Aorta (tissue), 5 donors: ENCODE measurements at regions of chr20 and their contacts with region 1.

Region 1: GRCh38 chr20:41693136-41693979 is 75.2 kb upstream of the CHD6 start:
- DNase-seq: peak; percentile 86 to 90
- ATAC-seq: peak; percentile 95
- H3K4me3 ChIP-seq: peak overlapping the region; percentile 79 to 89
- H3K27ac ChIP-seq: peak overlapping the region; percentile 71 to 83
- H3K4me1 ChIP-seq: no peaks in the 10 kb centered on the region
- H3K27me3 ChIP-seq: no peaks in the 10 kb centered on the region

Region 2: GRCh38 chr20:41476013-41476752 is 217.2 kb before region 1 on chr20:
- intact Hi-C with region 1: loop called (anchors 10 kb)
- DNase-seq: no peak
- ATAC-seq: no peak
- H3K4me3 ChIP-seq: no peak overlapping the region
- H3K27ac ChIP-seq: no peak overlapping the region
- H3K4me1 ChIP-seq: no peaks in the 10 kb centered on the region
- H3K27me3 ChIP-seq: no peaks in the 10 kb centered on the region

Region 3: GRCh38 chr20:41482647-41483552 is 210.5 kb before region 1 on chr20:
- intact Hi-C with region 1: loop called (anchors 10 kb)
- DNase-seq: no peak
- ATAC-seq: no peak
- H3K4me3 ChIP-seq: no peak overlapping the region
- H3K27ac ChIP-seq: peak overlapping the region in 1 of 2 donors; percentile 74
- H3K4me1 ChIP-seq: no peaks in the 10 kb centered on the region
- H3K27me3 ChIP-seq: no peaks in the 10 kb centered on the region

Region 4: GRCh38 chr20:41639630-41640029 is 53.7 kb before region 1 on chr20:
- intact Hi-C with region 1: loop called in 1 of 2 experiments (anchors 5 kb)
- DNase-seq: no peak
- ATAC-seq: no peak
- H3K4me3 ChIP-seq: no peak overlapping the region
- H3K27ac ChIP-seq: no peak overlapping the region
- H3K4me1 ChIP-seq: no peaks in the 10 kb centered on the region
- H3K27me3 ChIP-seq: no peaks in the 10 kb centered on the region